Right ventricle myocardium inferior (tissue), 1 donor: ENCODE measurements at regions of chr16 and their contacts with region 1.

Region 1: GRCh38 chr16:56048425-56049105 is 142.7 kb upstream of the GNAO1 start:
- DNase-seq: no peak
- ATAC-seq: no peak

Region 2: GRCh38 chr16:56108056-56108471 is 59.5 kb after region 1 on chr16:
- intact Hi-C with region 1: loop called (anchors 5 kb)
- DNase-seq: no peak
- ATAC-seq: peak; percentile 29